A673 (cell line): ENCODE measurements at regions of chr2 and their contacts with region 1.

Region 1: GRCh38 chr2:216519154-216519762 is 20.6 kb downstream of the RPL37A start:
- DNase-seq: peak; percentile 88
- H3K4me3 ChIP-seq: no peak overlapping the region
- H3K27ac ChIP-seq: no peak overlapping the region
- H3K4me1 ChIP-seq: peaks cover 12% of the 10 kb centered on the region
- H3K27me3 ChIP-seq: no peaks in the 10 kb centered on the region
- CTCF ChIP-seq: peak; percentile 86

Region 2: DNA sequence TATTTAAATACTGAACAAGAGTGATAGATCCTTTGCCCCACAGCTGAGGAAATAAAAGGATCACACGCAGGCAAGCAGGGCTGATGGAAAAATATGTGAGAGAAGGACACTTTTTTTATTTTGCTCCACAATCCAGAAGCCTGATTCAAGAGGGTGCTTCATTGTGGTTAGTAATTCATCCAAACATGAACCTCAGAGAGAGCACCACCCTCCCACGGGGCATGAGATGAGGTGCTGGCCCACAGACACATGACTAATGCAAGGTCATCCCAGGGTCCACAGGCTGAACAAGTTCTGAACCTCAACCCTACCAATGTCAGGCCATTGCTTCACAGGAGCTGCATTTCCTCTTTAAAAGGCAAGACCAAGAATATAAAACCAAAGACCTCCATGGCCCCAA is 745.5 kb before region 1 on chr2:
- CTCF ChIA-PET with region 1: no interaction called
- POLR2A ChIA-PET with region 1: no interaction called
- intact Hi-C with region 1: no loop called
- DNase-seq: no peak
- H3K4me3 ChIP-seq: no peak overlapping the region
- H3K27ac ChIP-seq: peak overlapping the region; percentile 98
- H3K4me1 ChIP-seq: peaks cover 58% of the 10 kb centered on the region
- H3K27me3 ChIP-seq: no peaks in the 10 kb centered on the region
- CTCF ChIP-seq: no peak

Region 3: GRCh38 chr2:216195565-216196029 is 323.7 kb before region 1 on chr2:
- CTCF ChIA-PET with region 1: no interaction called
- POLR2A ChIA-PET with region 1: interaction called, 15 read pairs
- intact Hi-C with region 1: no loop called
- DNase-seq: peak; percentile 15
- H3K4me3 ChIP-seq: no peak overlapping the region
- H3K27ac ChIP-seq: no peak overlapping the region
- H3K4me1 ChIP-seq: no peaks in the 10 kb centered on the region
- H3K27me3 ChIP-seq: no peaks in the 10 kb centered on the region
- CTCF ChIP-seq: no peak

Region 4: DNA sequence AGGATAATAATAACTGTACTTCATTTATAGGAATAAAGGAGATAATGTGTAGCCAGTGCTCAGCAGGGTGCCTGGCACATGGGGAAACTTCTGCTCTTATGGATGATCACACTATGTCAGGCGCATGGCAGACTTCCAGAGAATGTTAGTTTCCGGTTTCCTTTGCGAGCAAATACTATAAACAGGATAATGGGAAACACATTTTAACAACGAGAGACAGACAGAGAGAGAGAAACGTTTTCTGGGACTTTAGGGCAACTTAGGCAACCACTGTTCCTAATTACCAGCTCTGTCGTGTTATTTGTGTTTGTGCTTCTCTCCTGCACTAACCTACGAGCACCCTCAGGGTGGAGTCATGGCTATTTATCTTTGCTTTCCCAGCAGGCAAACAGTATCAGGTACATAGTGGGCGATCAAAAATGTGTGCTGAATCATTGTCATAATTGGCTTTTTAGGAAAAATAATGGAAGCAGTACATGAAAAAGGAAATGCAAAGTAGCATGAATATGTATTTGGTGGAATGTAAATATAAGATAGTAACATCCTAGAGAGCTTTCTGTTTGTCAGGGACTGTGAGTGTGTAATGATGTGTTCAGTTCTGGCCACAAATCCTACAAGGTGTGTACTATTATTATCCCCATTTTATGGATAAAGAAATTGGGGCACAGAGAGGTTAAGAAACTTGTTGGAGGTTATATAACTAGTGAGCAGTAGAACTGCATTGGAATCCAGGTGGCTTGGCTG is 77.2 kb after region 1 on chr2:
- CTCF ChIA-PET with region 1: no interaction called
- POLR2A ChIA-PET with region 1: no interaction called
- intact Hi-C with region 1: loop called (anchors 5 kb)
- DNase-seq: peak; percentile 99
- H3K4me3 ChIP-seq: peak overlapping the region; percentile 24
- H3K27ac ChIP-seq: peak overlapping the region; percentile 94
- H3K4me1 ChIP-seq: peaks cover 35% of the 10 kb centered on the region
- H3K27me3 ChIP-seq: no peaks in the 10 kb centered on the region
- CTCF ChIP-seq: no peak

Region 5: GRCh38 chr2:217510771-217511291 is 991.6 kb after region 1 on chr2:
- CTCF ChIA-PET with region 1: no interaction called
- POLR2A ChIA-PET with region 1: no interaction called
- intact Hi-C with region 1: loop called (anchors 2 kb)
- DNase-seq: peak; percentile 89
- H3K4me3 ChIP-seq: no peak overlapping the region
- H3K27ac ChIP-seq: no peak overlapping the region
- H3K4me1 ChIP-seq: peaks cover 9% of the 10 kb centered on the region
- H3K27me3 ChIP-seq: no peaks in the 10 kb centered on the region
- CTCF ChIP-seq: peak; percentile 84

Region 6: DNA sequence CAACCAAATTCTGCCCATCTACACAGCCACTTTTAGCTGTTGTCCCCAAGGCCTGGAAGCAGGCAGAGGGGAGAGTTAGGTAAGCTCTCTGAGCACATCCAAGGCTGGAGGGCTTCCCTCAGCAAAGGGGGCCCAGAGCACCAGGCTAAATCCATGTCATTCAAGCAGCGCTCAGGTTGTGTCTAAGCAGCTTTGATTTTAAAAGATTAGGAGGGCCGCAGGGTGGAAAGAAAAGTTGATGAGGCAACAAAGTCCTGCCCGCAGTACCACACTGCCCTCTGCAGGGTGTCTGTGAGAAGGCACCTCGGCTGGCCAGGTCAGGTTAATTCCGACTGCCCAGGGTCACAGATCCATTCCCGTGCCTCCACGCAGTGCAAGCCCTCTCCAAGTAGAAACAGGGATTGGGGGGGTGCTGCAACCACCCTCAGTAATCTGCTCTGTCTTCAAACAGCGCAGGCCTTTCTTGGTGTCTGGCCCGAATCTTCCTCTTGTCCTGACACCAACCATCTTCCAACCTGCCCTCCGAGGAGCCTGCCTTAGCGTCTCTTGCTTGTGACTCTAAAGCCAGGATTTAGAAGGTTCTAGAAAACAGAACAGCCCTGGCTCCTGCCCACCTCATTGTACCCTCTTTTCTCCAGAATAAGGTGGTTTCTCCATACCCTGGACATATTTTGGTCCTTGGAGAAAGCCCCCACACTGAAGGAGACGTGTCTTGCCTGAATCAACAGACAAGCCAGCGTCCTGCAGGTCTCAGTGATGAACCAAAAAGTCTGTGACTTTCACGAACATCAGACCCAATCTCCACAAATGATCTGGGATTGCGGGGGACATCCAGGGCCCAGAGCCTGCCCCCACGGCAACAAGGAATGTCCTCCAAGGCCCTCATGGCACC is 1194.4 kb after region 1 on chr2:
- CTCF ChIA-PET with region 1: no interaction called
- POLR2A ChIA-PET with region 1: no interaction called
- intact Hi-C with region 1: loop called (anchors 2 kb)
- DNase-seq: peak; percentile 71
- H3K4me3 ChIP-seq: no peak overlapping the region
- H3K27ac ChIP-seq: no peak overlapping the region
- H3K4me1 ChIP-seq: no peaks in the 10 kb centered on the region
- H3K27me3 ChIP-seq: no peaks in the 10 kb centered on the region
- CTCF ChIP-seq: peak; percentile 96